ENCODE measurements at regions of chr20 and their contacts with region 1.

Region 1: GRCh38 chr20:2914160-2914559 is 40.9 kb downstream of the PTPRA start:
- DNase-seq: no peak
- ATAC-seq: peak; percentile 31
- H3K4me3 Mint-ChIP-seq: no peak overlapping the region
- H3K27ac Mint-ChIP-seq: no peak overlapping the region
- H3K4me1 Mint-ChIP-seq: peaks cover 16% of the 10 kb centered on the region
- H3K27me3 Mint-ChIP-seq: no peaks in the 10 kb centered on the region

Region 2: GRCh38 chr20:2883726-2884637 is 30.2 kb before region 1 on chr20:
- CTCF ChIA-PET with region 1: no interaction called
- POLR2A ChIA-PET with region 1: interaction called, 4 read pairs
- intact Hi-C with region 1: loop called in 1 of 2 experiments (anchors 2 kb)
- DNase-seq: no peak
- ATAC-seq: peak; percentile 24
- H3K4me3 Mint-ChIP-seq: no peak overlapping the region
- H3K27ac Mint-ChIP-seq: peak overlapping the region; percentile 8
- H3K4me1 Mint-ChIP-seq: peaks cover 60% of the 10 kb centered on the region
- H3K27me3 Mint-ChIP-seq: no peaks in the 10 kb centered on the region

Region 3: DNA sequence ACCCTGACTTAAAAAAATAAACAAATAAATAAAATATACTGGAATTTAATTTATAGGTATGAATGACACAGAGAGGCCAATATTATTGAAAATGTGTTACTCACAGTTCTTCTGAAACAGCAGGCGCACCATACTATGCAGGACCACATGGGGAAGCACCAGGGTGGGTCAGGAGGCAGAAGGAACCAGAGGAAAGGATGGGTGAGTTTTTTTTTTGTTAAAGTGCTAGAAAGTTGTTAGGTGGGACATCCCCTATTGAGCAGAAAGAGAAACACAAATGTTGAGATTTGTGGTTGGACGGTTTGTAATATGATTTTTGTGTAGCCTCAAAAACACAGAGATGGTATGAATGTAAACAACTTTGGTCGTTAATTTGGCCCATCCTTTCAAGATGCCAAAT is 14.9 kb before region 1 on chr20:
- CTCF ChIA-PET with region 1: interaction called, 5 read pairs
- POLR2A ChIA-PET with region 1: interaction called, 3 read pairs
- intact Hi-C with region 1: loop called in 1 of 2 experiments (anchors 1 kb)
- DNase-seq: peak; percentile 61
- ATAC-seq: peak; percentile 94
- H3K4me3 Mint-ChIP-seq: no peak overlapping the region
- H3K27ac Mint-ChIP-seq: no peak overlapping the region
- H3K4me1 Mint-ChIP-seq: peaks cover 40% of the 10 kb centered on the region
- H3K27me3 Mint-ChIP-seq: no peaks in the 10 kb centered on the region

Region 4: GRCh38 chr20:2946988-2947961 is 33.1 kb after region 1 on chr20:
- CTCF ChIA-PET with region 1: no interaction called
- POLR2A ChIA-PET with region 1: no interaction called
- intact Hi-C with region 1: no loop called
- DNase-seq: no peak
- ATAC-seq: peak; percentile 60
- H3K4me3 Mint-ChIP-seq: no peak overlapping the region
- H3K27ac Mint-ChIP-seq: no peak overlapping the region
- H3K4me1 Mint-ChIP-seq: peaks cover 13% of the 10 kb centered on the region
- H3K27me3 Mint-ChIP-seq: no peaks in the 10 kb centered on the region

Region 5: DNA sequence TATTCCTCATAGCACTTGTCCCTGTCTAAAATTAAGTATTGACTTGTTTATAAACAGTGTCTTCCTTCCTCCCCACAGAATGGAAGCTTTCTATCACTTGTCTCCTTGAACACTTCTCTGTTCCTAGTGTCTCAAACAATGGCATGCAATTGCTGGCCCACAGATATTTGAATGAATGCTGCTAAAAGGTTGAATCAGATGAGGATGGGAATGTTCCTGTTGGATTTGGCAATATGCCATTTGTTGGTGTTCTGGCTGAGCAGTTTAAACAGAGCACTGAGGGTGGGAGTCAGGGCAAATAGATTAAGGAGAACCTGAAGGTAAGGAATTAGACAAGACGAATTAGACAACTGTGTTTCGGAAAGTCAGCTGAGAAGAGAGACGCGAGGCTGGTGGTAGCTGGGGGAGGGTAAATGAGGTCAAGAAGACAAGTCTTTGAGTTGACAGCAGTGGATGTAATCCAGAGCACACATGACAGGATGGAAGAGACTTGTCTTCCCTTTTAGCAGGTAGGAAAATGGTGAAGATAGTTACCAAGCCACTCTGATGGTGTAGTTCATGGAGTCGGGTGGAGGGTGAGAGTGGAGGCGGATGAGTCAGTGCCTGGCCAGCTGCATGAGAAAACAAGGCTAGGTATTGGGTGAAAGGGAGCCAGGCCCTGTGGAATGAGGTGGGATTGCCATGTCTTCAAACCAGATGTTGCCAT is 70.9 kb after region 1 on chr20:
- CTCF ChIA-PET with region 1: interaction called, 4 read pairs
- POLR2A ChIA-PET with region 1: no interaction called
- intact Hi-C with region 1: loop called (anchors 1 to 5 kb)
- DNase-seq: peak; percentile 71
- ATAC-seq: no peak
- H3K4me3 Mint-ChIP-seq: no peak overlapping the region
- H3K27ac Mint-ChIP-seq: no peak overlapping the region
- H3K4me1 Mint-ChIP-seq: peaks cover 25% of the 10 kb centered on the region
- H3K27me3 Mint-ChIP-seq: no peaks in the 10 kb centered on the region

Region 6: GRCh38 chr20:3000852-3001523 is 86.8 kb after region 1 on chr20:
- CTCF ChIA-PET with region 1: interaction called, 5 read pairs
- POLR2A ChIA-PET with region 1: no interaction called
- intact Hi-C with region 1: loop called (anchors 1 kb)
- DNase-seq: peak; percentile 23
- ATAC-seq: peak; percentile 98
- H3K4me3 Mint-ChIP-seq: no peak overlapping the region
- H3K27ac Mint-ChIP-seq: peak overlapping the region; percentile 59
- H3K4me1 Mint-ChIP-seq: peaks cover 11% of the 10 kb centered on the region
- H3K27me3 Mint-ChIP-seq: no peaks in the 10 kb centered on the region